WTC11 (cell line): ENCODE measurements at regions of chr10 and their contacts with region 1.

Region 1: DNA sequence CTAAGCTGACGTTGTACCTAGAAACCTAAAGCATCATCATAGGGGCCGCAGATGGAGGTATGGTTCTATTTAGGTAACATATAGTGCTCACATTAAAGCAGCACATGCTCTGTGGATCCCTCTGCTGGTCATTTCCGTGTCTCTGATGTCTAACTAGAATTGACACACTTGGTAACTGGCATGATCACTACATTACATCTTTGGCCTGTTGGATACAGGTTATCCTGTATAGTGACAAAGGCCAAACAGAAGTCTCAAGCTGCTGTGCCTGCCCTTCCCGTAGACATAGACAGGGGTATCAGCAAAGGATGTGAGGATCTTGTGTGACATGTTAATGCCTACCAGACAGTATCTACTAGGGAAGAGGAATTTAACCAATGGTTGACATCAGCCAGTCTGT is 51.2 kb downstream of the KIF5B start:
- DNase-seq: peak; percentile 29
- ATAC-seq: peak; percentile 44
- H3K4me3 Mint-ChIP-seq: no peak overlapping the region
- H3K27ac Mint-ChIP-seq: peak overlapping the region; percentile 89
- H3K4me1 Mint-ChIP-seq: peaks cover 46% of the 10 kb centered on the region
- H3K27me3 Mint-ChIP-seq: no peaks in the 10 kb centered on the region
- CTCF ChIP-seq: no peak

Region 2: GRCh38 chr10:31838065-31838464 is 167.0 kb before region 1 on chr10:
- CTCF ChIA-PET with region 1: interaction called, 13 read pairs
- POLR2A ChIA-PET with region 1: no interaction called
- DNase-seq: no peak
- ATAC-seq: no peak
- H3K4me3 Mint-ChIP-seq: no peak overlapping the region
- H3K27ac Mint-ChIP-seq: peak overlapping the region; percentile 60; the same call in 1 of the 2 replicates
- H3K4me1 Mint-ChIP-seq: peaks cover 19% of the 10 kb centered on the region
- H3K27me3 Mint-ChIP-seq: no peaks in the 10 kb centered on the region
- CTCF ChIP-seq: no peak

Region 3: GRCh38 chr10:31864834-31865518 is 140.1 kb before region 1 on chr10:
- CTCF ChIA-PET with region 1: interaction called, 25 read pairs
- POLR2A ChIA-PET with region 1: interaction called, 5 read pairs
- DNase-seq: no peak
- ATAC-seq: peak; percentile 93
- H3K4me3 Mint-ChIP-seq: peak overlapping the region; percentile 47
- H3K27ac Mint-ChIP-seq: peak overlapping the region; percentile 95
- H3K4me1 Mint-ChIP-seq: peaks cover 44% of the 10 kb centered on the region
- H3K27me3 Mint-ChIP-seq: no peaks in the 10 kb centered on the region
- CTCF ChIP-seq: no peak